Cardiac septum (tissue), 1 donor: ENCODE measurements at regions of chr17 and their contacts with region 1.

Region 1: GRCh38 chr17:21495281-21495680 is 119.1 kb downstream of the KCNJ12 start:
- DNase-seq: no peak

Region 2: GRCh38 chr17:21171309-21171922 is 323.9 kb before region 1 on chr17:
- intact Hi-C with region 1: no loop called
- DNase-seq: no peak

Region 3: DNA sequence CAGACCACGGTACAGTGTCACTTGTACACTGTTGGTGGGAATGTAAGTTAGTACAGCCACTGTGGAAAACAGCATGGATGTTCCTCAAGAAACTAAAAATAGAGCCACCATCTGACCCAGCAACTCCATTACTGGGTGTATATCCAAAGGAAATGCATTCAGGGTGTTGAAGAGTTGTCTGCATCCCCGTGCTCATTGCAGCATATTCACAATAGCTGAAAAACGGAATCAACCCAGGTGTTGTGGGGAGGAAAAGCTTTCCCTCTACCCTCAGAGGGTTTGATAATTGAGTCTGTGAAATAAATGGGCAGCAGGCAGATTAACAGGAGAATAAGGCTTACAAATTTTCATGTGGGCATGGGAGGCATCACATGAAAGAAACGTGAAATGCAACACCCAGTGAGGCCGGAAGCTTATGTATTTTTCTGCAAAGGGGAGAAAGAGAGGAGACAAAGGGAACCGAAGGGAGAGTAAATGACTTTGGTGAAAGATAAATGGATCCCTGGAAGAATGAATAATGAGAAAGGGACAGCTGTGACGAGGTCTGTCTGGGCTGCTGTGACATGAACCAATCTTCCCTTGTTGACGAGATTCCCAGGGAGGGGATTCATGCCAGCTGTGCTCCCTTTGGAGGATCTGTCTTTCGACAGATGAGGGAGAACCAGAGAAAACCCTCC is 13.0 kb before region 1 on chr17:
- intact Hi-C with region 1: loop called (anchors 1 kb)
- DNase-seq: no peak